ENCODE measurements at regions of chr16 and their contacts with region 1.

Region 1: DNA sequence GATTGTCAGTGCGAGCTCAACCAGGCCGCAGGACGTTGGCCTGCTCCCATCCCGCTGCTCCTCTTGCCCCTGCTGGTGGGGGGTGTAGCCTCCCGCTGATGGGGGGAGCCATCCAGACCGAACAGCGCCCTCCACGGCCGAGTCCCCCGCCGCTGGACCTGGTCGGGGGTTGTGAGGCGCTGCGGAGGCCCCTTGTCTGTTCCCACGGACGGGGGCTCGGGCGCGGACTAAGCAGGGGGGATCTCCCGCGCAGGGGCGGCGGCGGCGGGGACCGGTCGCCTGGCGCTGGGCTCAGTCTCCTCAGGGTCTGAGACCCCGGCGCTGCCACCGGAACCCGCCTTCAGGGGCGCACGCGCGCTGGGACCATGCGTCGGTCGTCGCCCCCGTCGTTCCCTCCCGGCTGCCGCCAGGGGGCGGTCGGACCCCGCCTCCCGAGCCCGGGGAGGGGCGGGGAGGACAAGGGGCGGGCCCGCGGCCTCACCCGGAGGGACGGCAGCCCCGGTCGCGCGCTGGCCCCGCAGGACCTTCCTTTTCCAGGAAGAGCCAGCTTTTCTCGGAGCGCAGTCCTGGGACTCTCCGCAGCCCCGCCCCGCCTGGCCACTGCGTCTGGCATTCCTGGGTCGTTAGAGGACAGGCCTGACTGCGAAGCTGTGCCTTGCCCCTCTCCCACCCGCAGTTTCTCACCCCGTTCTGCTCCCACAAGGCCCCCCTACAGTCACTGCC is 6.3 kb upstream of the IL32 start:
- DNase-seq: peak; percentile 86
- H3K4me3 Mint-ChIP-seq: peak overlapping the region; percentile 93
- H3K27ac Mint-ChIP-seq: peak overlapping the region; percentile 91
- H3K4me1 Mint-ChIP-seq: peaks cover 72% of the 10 kb centered on the region
- H3K27me3 Mint-ChIP-seq: no peaks in the 10 kb centered on the region

Region 2: GRCh38 chr16:3029537-3030402 is 29.4 kb before region 1 on chr16:
- CTCF ChIA-PET with region 1: interaction called, 72 read pairs
- POLR2A ChIA-PET with region 1: no interaction called
- DNase-seq: peak; percentile 58
- H3K4me3 Mint-ChIP-seq: peak overlapping the region; percentile 60
- H3K27ac Mint-ChIP-seq: no peak overlapping the region
- H3K4me1 Mint-ChIP-seq: peaks cover 39% of the 10 kb centered on the region
- H3K27me3 Mint-ChIP-seq: peaks cover 46% of the 10 kb centered on the region

Region 3: GRCh38 chr16:3074860-3075522 is 15.8 kb after region 1 on chr16:
- CTCF ChIA-PET with region 1: interaction called, 22 read pairs
- POLR2A ChIA-PET with region 1: interaction called, 3 read pairs
- DNase-seq: peak; percentile 94
- H3K4me3 Mint-ChIP-seq: peak overlapping the region; percentile 84
- H3K27ac Mint-ChIP-seq: peak overlapping the region; percentile 98
- H3K4me1 Mint-ChIP-seq: peaks cover 91% of the 10 kb centered on the region
- H3K27me3 Mint-ChIP-seq: no peaks in the 10 kb centered on the region

Region 4: DNA sequence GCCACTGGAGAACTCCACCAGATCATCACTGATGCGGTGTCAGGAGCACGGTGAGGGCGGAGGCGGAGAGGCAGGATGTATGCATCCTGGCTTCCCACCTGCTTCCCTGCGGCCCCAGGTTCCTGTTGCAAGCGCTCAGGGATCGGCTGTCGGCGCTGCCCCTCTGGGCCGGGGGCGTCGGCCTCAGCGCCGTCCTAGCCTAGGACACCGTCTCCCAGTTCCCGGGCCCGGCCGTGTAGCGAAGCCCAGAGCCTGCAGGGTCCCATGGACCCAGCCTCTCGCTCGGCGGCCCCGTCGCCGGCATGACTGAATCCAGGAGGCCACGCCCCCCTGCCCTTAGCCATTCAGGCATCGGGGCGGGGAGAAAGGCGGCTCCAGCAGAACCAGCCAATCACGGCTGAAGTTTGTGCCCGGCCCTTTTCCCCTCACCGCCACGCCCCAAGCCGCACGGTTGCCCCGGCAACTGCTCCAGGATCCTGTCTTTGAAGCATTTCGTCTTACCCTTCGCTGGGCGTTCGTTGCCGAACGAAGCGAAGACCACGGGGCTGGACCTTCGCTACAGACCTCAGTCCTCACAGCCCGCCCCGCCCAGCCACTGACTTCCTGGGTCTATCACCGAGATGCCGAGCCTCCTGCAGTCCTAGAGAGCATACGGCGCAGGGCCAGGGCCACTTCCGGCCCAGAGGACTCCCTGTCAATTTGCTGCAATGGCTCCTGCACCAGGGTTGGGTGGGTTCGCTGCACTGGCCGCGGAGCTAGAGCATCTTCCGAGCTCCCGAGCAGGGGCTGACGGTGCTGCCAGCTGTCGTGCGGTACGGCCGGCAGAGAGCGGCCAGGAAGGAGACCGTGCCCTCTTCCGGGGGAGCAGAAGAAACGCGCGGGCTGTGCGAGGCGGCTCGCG is 65.1 kb after region 1 on chr16:
- CTCF ChIA-PET with region 1: interaction called, 67 read pairs
- POLR2A ChIA-PET with region 1: interaction called, 11 read pairs
- DNase-seq: peak; percentile 98
- H3K4me3 Mint-ChIP-seq: peak overlapping the region; percentile 82
- H3K27ac Mint-ChIP-seq: peak overlapping the region; percentile 97
- H3K4me1 Mint-ChIP-seq: peaks cover 52% of the 10 kb centered on the region
- H3K27me3 Mint-ChIP-seq: no peaks in the 10 kb centered on the region